ENCODE measurements at regions of chr3 and their contacts with region 1.

Region 1: GRCh38 chr3:11072631-11073030 is 80.1 kb downstream of the SLC6A1 start:
- DNase-seq: no peak
- H3K4me3 ChIP-seq: no peak overlapping the region
- H3K4me3 Mint-ChIP-seq: no peak overlapping the region
- H3K27ac ChIP-seq: no peak overlapping the region
- H3K27ac Mint-ChIP-seq: no peak overlapping the region
- H3K4me1 ChIP-seq: no peaks in the 10 kb centered on the region
- H3K4me1 Mint-ChIP-seq: no peaks in the 10 kb centered on the region
- H3K27me3 ChIP-seq: no peaks in the 10 kb centered on the region
- H3K27me3 Mint-ChIP-seq: peaks cover 11 to 28% of the 10 kb centered on the region in 2 donors

Region 2: GRCh38 chr3:11060500-11061251 is 12.0 kb before region 1 on chr3:
- CTCF ChIA-PET with region 1: interaction called, 10 read pairs
- POLR2A ChIA-PET with region 1: no interaction called
- DNase-seq: peak in 1 of 5 donors; percentile 13
- H3K4me3 ChIP-seq: no peak overlapping the region
- H3K4me3 Mint-ChIP-seq: no peak overlapping the region
- H3K27ac ChIP-seq: no peak overlapping the region
- H3K27ac Mint-ChIP-seq: no peak overlapping the region
- H3K4me1 ChIP-seq: no peaks in the 10 kb centered on the region
- H3K4me1 Mint-ChIP-seq: peaks cover 3 to 5% (median 5%) of the 10 kb centered on the region in 3 donors
- H3K27me3 ChIP-seq: no peaks in the 10 kb centered on the region
- H3K27me3 Mint-ChIP-seq: peaks cover 5 to 31% of the 10 kb centered on the region in 2 donors